Vagina (tissue), 2 donors: ENCODE measurements at regions of chr17 and their contacts with region 1.

Region 1: GRCh38 chr17:29931231-29931932 is 1.4 kb upstream of the SSH2 start:
- DNase-seq: no peak
- H3K4me3 ChIP-seq: peak overlapping the region; percentile 72 to 79
- H3K27ac ChIP-seq: no peak overlapping the region
- H3K4me1 ChIP-seq: peaks cover 23% of the 10 kb centered on the region
- H3K27me3 ChIP-seq: no peaks in the 10 kb centered on the region
- CTCF ChIP-seq: peak; percentile 77 to 94 (median 85)
- POLR2A ChIP-seq: no peak

Region 2: DNA sequence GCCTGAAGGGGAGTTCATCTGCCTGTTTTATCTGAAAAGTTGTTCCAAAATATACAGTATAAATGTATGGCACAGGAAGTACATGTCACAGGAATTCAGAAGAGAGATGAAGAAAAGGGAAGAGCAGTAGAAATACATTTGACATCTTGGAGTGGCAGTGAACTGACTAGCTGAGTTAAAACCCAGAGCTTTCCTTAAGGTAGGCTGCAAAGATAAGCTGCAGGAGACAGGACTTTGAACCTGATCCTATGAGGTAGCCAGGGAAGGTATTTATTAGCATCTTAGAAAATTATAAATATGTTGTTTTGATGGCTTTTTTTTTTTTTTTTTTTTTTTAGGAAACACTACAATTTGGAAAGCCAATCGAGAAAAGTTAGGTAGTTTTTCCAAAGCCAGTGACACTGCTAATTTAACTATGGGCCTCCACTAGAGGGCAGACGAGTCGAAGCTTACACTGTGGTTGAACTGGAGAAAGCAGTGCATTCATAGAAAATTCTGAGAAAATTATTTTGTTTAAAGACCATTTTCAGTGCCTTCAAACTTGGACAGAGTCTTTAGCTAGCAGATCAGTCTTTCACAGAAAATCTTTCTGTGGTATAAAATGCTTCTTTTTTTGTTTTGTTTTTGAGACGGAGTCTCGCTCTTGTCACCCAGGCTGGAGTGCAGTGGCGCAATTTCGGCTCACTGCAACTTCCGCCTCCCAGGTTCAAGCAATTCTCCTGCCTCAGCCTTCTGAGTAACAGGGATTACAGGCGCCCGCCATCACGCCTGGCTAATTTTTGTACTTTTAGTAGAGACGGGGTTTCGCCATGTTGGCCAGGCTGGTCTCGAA is 123.6 kb before region 1 on chr17:
- intact Hi-C with region 1: loop called (anchors 2 kb)
- DNase-seq: no peak
- H3K4me3 ChIP-seq: no peak overlapping the region
- H3K27ac ChIP-seq: no peak overlapping the region
- H3K4me1 ChIP-seq: no peaks in the 10 kb centered on the region
- H3K27me3 ChIP-seq: no peaks in the 10 kb centered on the region
- CTCF ChIP-seq: peak; percentile 53 to 68 (median 65)
- POLR2A ChIP-seq: no peak